ENCODE measurements at regions of chr9 and their contacts with region 1.

Region 1: GRCh38 chr9:129776938-129777768 is 24.3 kb upstream of the PTGES start:
- DNase-seq: peak; percentile 96 to 99
- ATAC-seq: peak; percentile 95 to 97
- H3K4me3 ChIP-seq: 0 out of 3 replicates have a peak overlapping the region, but pooled peaks have one; percentile 11
- H3K27ac ChIP-seq: peak overlapping the region; percentile 88 to 89
- H3K4me1 ChIP-seq: peaks cover 66% of the 10 kb centered on the region
- CTCF ChIP-seq: no peak
- EP300 ChIP-seq: peak; percentile 55 to 89; a peak in 3 of 5 replicates
- POLR2A ChIP-seq: peak; percentile 42
- RAD21 ChIP-seq: peak in 1 of 2 experiments; percentile 26; a peak in 1 of 5 replicates

Region 2: GRCh38 chr9:129752915-129753729 is 24.0 kb before region 1 on chr9 and contains the start of gene PTGES:
- CTCF ChIA-PET with region 1: interaction called, 51 read pairs
- POLR2A ChIA-PET with region 1: interaction called, 26 read pairs
- DNase-seq: peak; percentile 79 to 91
- ATAC-seq: peak; percentile 93 to 97
- H3K4me3 ChIP-seq: peak within 1 kb of the TSS; percentile 51
- H3K27ac ChIP-seq: peak within 1 kb of the TSS; percentile 64 to 78
- H3K4me1 ChIP-seq: peaks cover 47% of the 10 kb centered on the region
- CTCF ChIP-seq: no peak
- EP300 ChIP-seq: no peak
- POLR2A ChIP-seq: peak; percentile 51
- RAD21 ChIP-seq: no peak
- polyA plus RNA-seq, gene PTGES: 19.1 and 22.1 TPM in 2 replicates

Region 3: GRCh38 chr9:129761901-129762364 is 15.2 kb before region 1 on chr9:
- CTCF ChIA-PET with region 1: interaction called, 76 read pairs
- POLR2A ChIA-PET with region 1: interaction called, 27 read pairs
- DNase-seq: peak in 1 of 2 experiments; percentile 85
- ATAC-seq: peak; percentile 81 to 87
- H3K4me3 ChIP-seq: no peak overlapping the region
- H3K27ac ChIP-seq: peak overlapping the region; percentile 59 to 91
- H3K4me1 ChIP-seq: peaks cover 25% of the 10 kb centered on the region
- CTCF ChIP-seq: no peak
- EP300 ChIP-seq: no peak
- POLR2A ChIP-seq: no peak
- RAD21 ChIP-seq: no peak

Region 4: GRCh38 chr9:129796029-129796910 is 19.1 kb after region 1 on chr9:
- CTCF ChIA-PET with region 1: interaction called, 14 read pairs
- POLR2A ChIA-PET with region 1: interaction called, 4 read pairs
- DNase-seq: no peak
- ATAC-seq: peak in 1 of 2 experiments; percentile 16; a peak in 2 of 6 replicates
- H3K4me3 ChIP-seq: no peak overlapping the region
- H3K27ac ChIP-seq: no peak overlapping the region
- H3K4me1 ChIP-seq: peaks cover 3% of the 10 kb centered on the region; the same call in 1 of the 3 replicates
- CTCF ChIP-seq: no peak
- EP300 ChIP-seq: no peak
- POLR2A ChIP-seq: no peak
- RAD21 ChIP-seq: no peak

Measured in A549 (cell line).